HAP-1 (cell line): ENCODE measurements at regions of chr2 and their contacts with region 1.

Region 1: GRCh38 chr2:30714811-30715709 is 92.2 kb downstream of the CAPN13 start:
- DNase-seq: no peak
- H3K4me3 ChIP-seq: no peak overlapping the region
- H3K4me1 ChIP-seq: no peaks in the 10 kb centered on the region
- H3K27me3 ChIP-seq: no peaks in the 10 kb centered on the region

Region 2: GRCh38 chr2:30639841-30640240 is 75.2 kb before region 1 on chr2:
- in situ Hi-C with region 1: no loop called
- DNase-seq: no peak
- H3K4me3 ChIP-seq: no peak overlapping the region
- H3K4me1 ChIP-seq: no peaks in the 10 kb centered on the region; the same call in 1 of the 2 replicates
- H3K27me3 ChIP-seq: no peaks in the 10 kb centered on the region

Region 3: DNA sequence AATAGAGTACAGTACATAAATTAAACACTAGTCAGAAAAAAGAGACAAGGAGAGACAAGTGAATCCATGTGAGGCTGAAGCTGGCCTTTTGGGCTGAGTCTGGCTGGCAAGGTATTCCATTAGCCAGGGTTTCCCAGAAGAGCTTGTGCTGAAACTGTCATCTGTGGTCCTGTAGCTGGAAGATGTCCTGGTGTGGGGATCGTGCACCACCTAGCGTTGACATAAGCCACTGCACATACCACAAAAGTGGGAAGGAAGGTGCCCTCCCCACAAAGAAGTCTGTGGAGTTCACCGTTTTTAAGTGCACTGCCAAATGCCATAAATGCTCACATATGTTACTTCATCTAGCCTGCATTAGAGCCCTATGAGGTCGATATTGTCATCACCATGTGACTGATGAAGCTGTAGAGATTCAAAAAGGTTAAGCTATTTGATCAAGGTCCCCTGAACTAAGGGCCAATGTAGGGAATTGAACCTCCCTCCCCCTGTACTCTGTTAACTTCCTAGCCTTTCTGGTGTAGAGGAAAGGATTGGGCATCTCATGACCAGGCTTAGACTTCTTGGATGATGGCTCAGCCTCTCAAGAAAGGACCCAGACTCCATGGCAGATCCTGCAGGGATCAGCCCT is 455.1 kb after region 1 on chr2:
- in situ Hi-C with region 1: loop called (anchors 5 kb)
- DNase-seq: peak; percentile 28 to 66
- H3K4me3 ChIP-seq: no peak overlapping the region
- H3K4me1 ChIP-seq: no peaks in the 10 kb centered on the region
- H3K27me3 ChIP-seq: no peaks in the 10 kb centered on the region

Region 4: DNA sequence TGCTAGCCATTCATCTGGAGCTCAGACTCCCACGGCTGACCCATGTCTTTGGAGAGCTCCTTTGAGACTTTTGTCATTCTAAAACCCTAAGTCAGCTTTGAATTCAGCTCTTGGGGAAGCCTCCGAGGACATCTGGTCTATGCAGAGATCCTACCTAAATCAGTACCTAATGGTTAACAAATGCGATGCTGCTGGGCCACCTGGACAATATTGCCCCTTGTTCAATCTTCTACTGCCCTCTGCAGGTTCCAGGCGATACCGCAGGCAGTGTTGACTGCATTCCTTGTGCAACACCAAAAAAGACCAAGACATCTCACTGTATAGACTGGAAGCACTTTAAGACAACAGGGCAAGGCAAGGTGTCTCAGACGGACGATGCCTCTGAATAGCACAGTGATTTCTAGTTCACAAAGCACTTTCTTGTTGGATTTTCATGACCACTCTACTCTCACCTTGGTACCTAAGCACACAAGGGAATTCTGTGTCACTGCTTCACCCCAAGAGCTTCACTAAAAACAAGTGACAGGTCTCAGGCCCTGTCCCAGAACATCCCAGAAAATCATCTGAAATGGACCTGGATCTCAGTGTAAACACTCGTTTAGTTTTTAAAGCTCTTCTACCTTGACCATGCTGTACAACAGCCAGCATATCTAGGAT is 618.6 kb after region 1 on chr2:
- in situ Hi-C with region 1: loop called (anchors 5 kb)
- DNase-seq: peak; percentile 36 to 80
- H3K4me3 ChIP-seq: no peak overlapping the region
- H3K4me1 ChIP-seq: no peaks in the 10 kb centered on the region
- H3K27me3 ChIP-seq: no peaks in the 10 kb centered on the region; the same call in 1 of the 2 replicates

Region 5: GRCh38 chr2:31434911-31435310 is 719.9 kb after region 1 on chr2:
- in situ Hi-C with region 1: no loop called
- DNase-seq: no peak
- H3K4me3 ChIP-seq: no peak overlapping the region
- H3K4me1 ChIP-seq: no peaks in the 10 kb centered on the region
- H3K27me3 ChIP-seq: no peaks in the 10 kb centered on the region